ENCODE measurements at regions of chr20 and their contacts with region 1.

Region 1: DNA sequence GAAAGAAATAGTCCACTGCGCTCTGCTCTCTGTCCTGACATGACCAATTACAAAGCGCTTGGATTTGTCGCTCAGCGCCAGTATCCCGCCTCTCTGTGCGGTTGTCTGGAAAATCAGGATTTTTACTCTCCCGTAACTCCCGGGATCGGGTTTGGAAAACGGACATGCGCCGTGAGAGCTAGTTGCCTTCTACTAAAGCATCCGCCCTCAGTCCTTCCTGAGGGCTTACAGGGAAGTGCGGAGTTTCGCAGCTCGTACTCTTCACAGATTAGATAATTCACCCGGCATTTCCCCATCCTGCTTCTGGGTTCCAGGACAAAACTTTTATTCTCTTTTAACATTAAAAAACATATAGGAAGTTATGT is 427 bp upstream of the MKKS start:
- DNase-seq: peak; percentile 99
- H3K4me3 ChIP-seq: peak overlapping the region; percentile 76 to 92 (median 87)
- H3K27ac ChIP-seq: peak overlapping the region; percentile 89
- H3K4me1 ChIP-seq: peaks cover 21% of the 10 kb centered on the region
- H3K27me3 ChIP-seq: no peaks in the 10 kb centered on the region
- CTCF ChIP-seq: no peak

Region 2: GRCh38 chr20:10381493-10381892 is 53.0 kb before region 1 on chr20:
- CTCF ChIA-PET with region 1: no interaction called
- dilution Hi-C with region 1: no loop called
- in situ Hi-C with region 1: no loop called
- intact Hi-C with region 1: no loop called
- DNase-seq: no peak
- H3K4me3 ChIP-seq: no peak overlapping the region
- H3K27ac ChIP-seq: no peak overlapping the region
- H3K4me1 ChIP-seq: no peaks in the 10 kb centered on the region
- H3K27me3 ChIP-seq: peaks cover 3% of the 10 kb centered on the region
- CTCF ChIP-seq: peak in 1 of 2 donors; percentile 14

Region 3: GRCh38 chr20:10419550-10420133 is 14.8 kb before region 1 on chr20:
- CTCF ChIA-PET with region 1: no interaction called
- dilution Hi-C with region 1: no loop called
- in situ Hi-C with region 1: no loop called
- intact Hi-C with region 1: loop called (anchors 2 kb)
- DNase-seq: peak; percentile 87
- H3K4me3 ChIP-seq: peak overlapping the region; percentile 35 to 40 (median 36)
- H3K27ac ChIP-seq: peak overlapping the region; percentile 96
- H3K4me1 ChIP-seq: peaks cover 38% of the 10 kb centered on the region
- H3K27me3 ChIP-seq: no peaks in the 10 kb centered on the region
- CTCF ChIP-seq: no peak